Activated CD4-positive, alpha-beta memory T cell treated with anti-CD3 and anti-CD28 coated beads for 36 hours (primary cell): ENCODE measurements at regions of chr7 and their contacts with region 1.

Region 1: GRCh38 chr7:37495574-37496184 is 47.0 kb upstream of the ELMO1 start:
- DNase-seq: no peak
- H3K4me3 Mint-ChIP-seq: no peak overlapping the region
- H3K27ac Mint-ChIP-seq: no peak overlapping the region
- H3K4me1 Mint-ChIP-seq: peaks cover 8% of the 10 kb centered on the region
- H3K27me3 Mint-ChIP-seq: no peaks in the 10 kb centered on the region

Region 2: GRCh38 chr7:37149051-37149772 is 346.5 kb before region 1 on chr7:
- CTCF ChIA-PET with region 1: no interaction called
- POLR2A ChIA-PET with region 1: no interaction called
- intact Hi-C with region 1: no loop called
- DNase-seq: no peak
- H3K4me3 Mint-ChIP-seq: no peak overlapping the region
- H3K27ac Mint-ChIP-seq: no peak overlapping the region
- H3K4me1 Mint-ChIP-seq: peaks cover 9% of the 10 kb centered on the region
- H3K27me3 Mint-ChIP-seq: no peaks in the 10 kb centered on the region

Region 3: DNA sequence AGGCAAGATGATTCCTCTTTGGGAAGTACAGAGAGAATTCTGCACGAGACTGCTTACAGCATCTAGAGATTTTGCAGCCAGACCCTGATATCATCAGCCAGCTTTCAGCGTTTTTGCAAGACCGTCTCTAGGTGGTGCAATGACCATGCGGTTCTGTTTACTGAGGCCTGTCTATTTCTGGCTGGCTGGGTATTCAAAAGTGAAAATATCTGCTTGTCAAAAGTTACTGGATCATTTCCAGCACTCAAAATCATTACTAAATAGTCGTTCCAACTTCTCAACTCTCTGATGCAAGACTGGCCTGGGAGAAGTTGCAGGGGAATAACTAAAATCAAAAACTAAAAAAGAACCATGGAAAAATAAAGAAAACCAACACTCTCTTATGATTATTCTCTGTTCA is 287.2 kb before region 1 on chr7:
- CTCF ChIA-PET with region 1: interaction called, 8 read pairs
- POLR2A ChIA-PET with region 1: no interaction called
- intact Hi-C with region 1: loop called (anchors 1 kb)
- DNase-seq: peak; percentile 36
- H3K4me3 Mint-ChIP-seq: no peak overlapping the region
- H3K27ac Mint-ChIP-seq: peak overlapping the region; percentile 44
- H3K4me1 Mint-ChIP-seq: peaks cover 18% of the 10 kb centered on the region
- H3K27me3 Mint-ChIP-seq: no peaks in the 10 kb centered on the region

Region 4: DNA sequence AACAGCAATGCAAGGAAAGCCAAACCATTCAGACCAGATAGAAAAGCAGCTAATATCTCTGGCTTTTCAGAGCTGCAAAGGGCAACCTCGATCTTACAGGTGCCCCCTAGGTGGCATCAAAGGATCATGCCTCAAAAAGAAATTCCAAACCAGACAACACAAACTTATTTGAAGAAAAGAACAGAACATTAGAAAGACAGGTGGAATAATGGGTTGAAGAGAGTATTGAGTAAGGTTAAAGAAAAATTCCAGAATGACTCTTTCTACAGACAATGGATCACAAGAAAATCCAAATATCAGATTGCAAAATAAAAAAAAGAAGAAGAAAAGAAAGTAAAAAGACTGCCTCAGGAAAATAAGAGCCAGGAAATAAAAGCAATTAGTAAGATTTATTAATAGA is 260.8 kb before region 1 on chr7:
- CTCF ChIA-PET with region 1: interaction called, 26 read pairs
- POLR2A ChIA-PET with region 1: no interaction called
- intact Hi-C with region 1: loop called (anchors 10 kb)
- DNase-seq: no peak
- H3K4me3 Mint-ChIP-seq: no peak overlapping the region
- H3K27ac Mint-ChIP-seq: no peak overlapping the region
- H3K4me1 Mint-ChIP-seq: peaks cover 19% of the 10 kb centered on the region
- H3K27me3 Mint-ChIP-seq: no peaks in the 10 kb centered on the region

Region 5: DNA sequence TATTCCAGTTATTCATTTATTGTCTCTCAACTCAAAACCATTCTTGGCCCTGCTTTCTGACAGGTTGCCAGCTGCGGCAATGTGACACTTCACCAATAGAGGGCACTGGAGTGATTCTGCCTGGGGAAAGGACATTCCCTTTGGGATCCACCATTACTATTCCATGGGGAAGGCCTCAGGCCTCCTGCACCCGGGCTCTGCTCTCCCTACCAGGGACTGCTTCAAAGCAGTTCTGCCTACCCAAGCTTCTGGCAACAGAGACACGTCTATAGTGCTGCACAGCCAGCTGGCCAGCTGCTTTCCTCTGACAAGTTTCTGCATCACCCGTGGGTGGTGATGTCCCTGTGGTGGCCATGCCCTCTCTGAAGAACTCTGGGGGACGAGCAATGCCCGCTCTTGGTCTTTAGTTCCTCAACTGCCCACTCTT is 210.9 kb before region 1 on chr7:
- CTCF ChIA-PET with region 1: interaction called, 10 read pairs
- POLR2A ChIA-PET with region 1: no interaction called
- intact Hi-C with region 1: loop called (anchors 2 kb)
- DNase-seq: peak; percentile 57
- H3K4me3 Mint-ChIP-seq: no peak overlapping the region
- H3K27ac Mint-ChIP-seq: no peak overlapping the region
- H3K4me1 Mint-ChIP-seq: peaks cover 45% of the 10 kb centered on the region
- H3K27me3 Mint-ChIP-seq: no peaks in the 10 kb centered on the region

Region 6: GRCh38 chr7:37524797-37525196 is 29.1 kb after region 1 on chr7:
- CTCF ChIA-PET with region 1: no interaction called
- POLR2A ChIA-PET with region 1: no interaction called
- intact Hi-C with region 1: no loop called
- DNase-seq: no peak
- H3K4me3 Mint-ChIP-seq: no peak overlapping the region
- H3K27ac Mint-ChIP-seq: no peak overlapping the region
- H3K4me1 Mint-ChIP-seq: no peaks in the 10 kb centered on the region
- H3K27me3 Mint-ChIP-seq: peaks cover 11% of the 10 kb centered on the region

Region 7: GRCh38 chr7:37540917-37541316 is 45.2 kb after region 1 on chr7:
- CTCF ChIA-PET with region 1: no interaction called
- POLR2A ChIA-PET with region 1: no interaction called
- intact Hi-C with region 1: no loop called
- DNase-seq: no peak
- H3K4me3 Mint-ChIP-seq: no peak overlapping the region
- H3K27ac Mint-ChIP-seq: no peak overlapping the region
- H3K4me1 Mint-ChIP-seq: no peaks in the 10 kb centered on the region
- H3K27me3 Mint-ChIP-seq: peaks cover 3% of the 10 kb centered on the region

Region 8: GRCh38 chr7:37770838-37771237 is 275.2 kb after region 1 on chr7:
- CTCF ChIA-PET with region 1: no interaction called
- POLR2A ChIA-PET with region 1: no interaction called
- intact Hi-C with region 1: no loop called
- DNase-seq: no peak
- H3K4me3 Mint-ChIP-seq: no peak overlapping the region
- H3K27ac Mint-ChIP-seq: no peak overlapping the region
- H3K4me1 Mint-ChIP-seq: no peaks in the 10 kb centered on the region
- H3K27me3 Mint-ChIP-seq: no peaks in the 10 kb centered on the region